ENCODE measurements at regions of chr3 and their contacts with region 1.

Region 1: GRCh38 chr3:71725279-71725991 is at the start of gene EIF4E3:
- DNase-seq: peak; percentile 40
- H3K4me3 Mint-ChIP-seq: peak within 1 kb of the TSS; percentile 98
- H3K27ac Mint-ChIP-seq: peak within 1 kb of the TSS; percentile 96
- H3K4me1 Mint-ChIP-seq: peaks cover 66% of the 10 kb centered on the region
- H3K27me3 Mint-ChIP-seq: no peaks in the 10 kb centered on the region
- total RNA-seq, gene EIF4E3: 36.7 to 37.6 TPM

Region 2: DNA sequence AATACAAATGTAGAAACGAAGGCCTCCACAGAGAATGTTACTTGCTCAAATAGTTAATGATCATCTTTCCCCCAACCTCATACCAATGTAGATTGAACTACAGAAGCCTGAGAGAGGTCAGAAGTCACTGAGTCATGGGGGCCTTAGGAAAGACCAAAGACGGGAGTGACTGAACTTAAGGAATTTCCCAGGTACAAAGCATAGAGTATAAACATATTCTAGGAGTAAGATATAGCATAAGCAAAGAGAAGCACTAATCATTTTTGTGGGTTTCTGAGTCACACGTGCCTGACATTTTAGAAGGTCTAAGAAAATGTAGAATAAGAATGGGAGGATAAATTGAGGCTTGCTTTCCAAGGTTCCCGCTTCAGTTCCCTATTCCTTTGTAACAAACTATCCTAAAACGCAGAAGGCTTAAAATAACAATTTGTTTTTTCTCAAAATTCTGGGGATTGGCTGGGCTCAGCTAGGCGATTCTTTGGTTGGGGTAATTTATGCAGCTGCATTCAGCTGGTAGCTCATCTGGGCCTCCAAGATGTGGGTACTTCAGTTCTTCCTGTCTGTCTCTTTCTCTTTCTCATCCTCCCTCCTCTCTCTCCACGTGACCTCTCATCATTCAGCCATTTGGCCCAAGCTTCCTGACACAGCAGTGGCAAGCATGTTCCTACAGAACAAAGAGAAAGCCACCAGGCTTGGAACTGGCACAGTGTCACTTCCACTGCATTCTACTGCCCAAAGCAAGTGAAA is 564.5 kb before region 1 on chr3:
- CTCF ChIA-PET with region 1: no interaction called
- POLR2A ChIA-PET with region 1: no interaction called
- intact Hi-C with region 1: no loop called
- DNase-seq: peak; percentile 18
- H3K4me3 Mint-ChIP-seq: no peak overlapping the region
- H3K27ac Mint-ChIP-seq: peak overlapping the region; percentile 51
- H3K4me1 Mint-ChIP-seq: peaks cover 56% of the 10 kb centered on the region
- H3K27me3 Mint-ChIP-seq: no peaks in the 10 kb centered on the region

Region 3: GRCh38 chr3:71360764-71361163 is 364.7 kb before region 1 on chr3:
- CTCF ChIA-PET with region 1: no interaction called
- POLR2A ChIA-PET with region 1: no interaction called
- intact Hi-C with region 1: loop called (anchors 5 kb)
- DNase-seq: peak; percentile 52
- H3K4me3 Mint-ChIP-seq: peak overlapping the region; percentile 39
- H3K27ac Mint-ChIP-seq: peak overlapping the region; percentile 89
- H3K4me1 Mint-ChIP-seq: peaks cover 76% of the 10 kb centered on the region
- H3K27me3 Mint-ChIP-seq: no peaks in the 10 kb centered on the region

Region 4: GRCh38 chr3:71753630-71754483 is 28.4 kb after region 1 on chr3 and contains the start of gene GPR27:
- CTCF ChIA-PET with region 1: interaction called, 7 read pairs
- POLR2A ChIA-PET with region 1: no interaction called
- intact Hi-C with region 1: loop called (anchors 2 kb)
- DNase-seq: peak; percentile 41
- H3K4me3 Mint-ChIP-seq: peak within 1 kb of the TSS; percentile 54
- H3K27ac Mint-ChIP-seq: no peak within 1 kb of the TSS
- H3K4me1 Mint-ChIP-seq: peaks cover 5% of the 10 kb centered on the region
- H3K27me3 Mint-ChIP-seq: peaks cover 38% of the 10 kb centered on the region
- total RNA-seq, gene GPR27: 1.2 to 1.3 TPM

Region 5: GRCh38 chr3:71978150-71978721 is 252.8 kb after region 1 on chr3:
- CTCF ChIA-PET with region 1: no interaction called
- POLR2A ChIA-PET with region 1: no interaction called
- intact Hi-C with region 1: loop called (anchors 5 kb)
- DNase-seq: peak; percentile 67
- H3K4me3 Mint-ChIP-seq: peak overlapping the region; percentile 38
- H3K27ac Mint-ChIP-seq: peak overlapping the region; percentile 88
- H3K4me1 Mint-ChIP-seq: peaks cover 44% of the 10 kb centered on the region
- H3K27me3 Mint-ChIP-seq: peaks cover 19% of the 10 kb centered on the region

Region 6: DNA sequence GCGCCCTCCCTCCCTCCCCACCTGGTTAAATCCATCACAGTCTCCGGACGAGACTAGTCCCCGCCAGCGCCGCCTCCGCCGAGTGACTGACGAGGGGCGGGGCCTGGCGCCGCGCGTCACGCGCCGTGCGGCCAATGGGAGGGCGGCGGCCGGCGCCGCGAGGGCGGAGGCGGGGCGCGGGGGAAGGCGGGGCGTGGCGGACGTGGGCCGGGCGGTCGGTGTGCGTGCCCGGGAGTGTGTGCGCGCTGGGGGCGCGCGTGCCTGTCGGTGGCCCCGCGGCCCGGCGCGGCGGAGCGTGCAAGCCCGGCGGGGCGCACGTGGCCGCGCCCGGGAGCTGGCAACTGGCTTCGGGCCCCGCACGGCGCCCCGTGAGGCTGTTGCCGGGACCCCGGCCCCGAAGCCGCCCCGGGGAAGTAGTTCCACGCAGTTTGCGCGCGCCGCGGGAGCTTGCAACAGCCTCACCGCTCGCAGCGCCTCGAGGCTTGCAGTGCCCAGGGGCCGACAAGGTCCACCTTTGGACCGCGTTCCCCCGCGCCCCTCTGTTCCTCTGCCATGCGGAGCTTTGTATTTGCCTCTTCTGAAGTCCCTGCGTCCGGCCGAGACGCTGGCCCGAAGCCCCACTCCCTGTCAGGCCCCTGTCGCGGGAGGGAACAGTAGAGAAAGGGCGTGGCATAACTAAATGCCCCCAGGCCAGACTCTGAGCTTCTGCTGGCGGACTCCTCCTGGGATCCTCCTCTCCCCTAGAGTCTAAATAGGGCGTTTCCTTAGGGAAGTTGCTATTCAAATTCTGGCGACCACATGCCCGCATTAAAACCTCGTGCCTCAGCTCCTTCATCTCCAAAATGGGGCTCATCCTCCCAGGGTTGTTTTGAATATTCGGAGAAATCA is 721.9 kb after region 1 on chr3:
- CTCF ChIA-PET with region 1: no interaction called
- POLR2A ChIA-PET with region 1: no interaction called
- intact Hi-C with region 1: loop called (anchors 10 kb)
- DNase-seq: peak; percentile 93
- H3K4me3 Mint-ChIP-seq: peak overlapping the region; percentile 61
- H3K27ac Mint-ChIP-seq: no peak overlapping the region
- H3K4me1 Mint-ChIP-seq: peaks cover 34% of the 10 kb centered on the region
- H3K27me3 Mint-ChIP-seq: peaks cover 23% of the 10 kb centered on the region

Region 7: GRCh38 chr3:72977060-72977808 is 1251.8 kb after region 1 on chr3:
- CTCF ChIA-PET with region 1: no interaction called
- POLR2A ChIA-PET with region 1: no interaction called
- intact Hi-C with region 1: no loop called
- DNase-seq: peak; percentile 57
- H3K4me3 Mint-ChIP-seq: peak overlapping the region; percentile 20
- H3K27ac Mint-ChIP-seq: peak overlapping the region; percentile 83
- H3K4me1 Mint-ChIP-seq: peaks cover 28% of the 10 kb centered on the region
- H3K27me3 Mint-ChIP-seq: peaks cover 2% of the 10 kb centered on the region

Region 8: DNA sequence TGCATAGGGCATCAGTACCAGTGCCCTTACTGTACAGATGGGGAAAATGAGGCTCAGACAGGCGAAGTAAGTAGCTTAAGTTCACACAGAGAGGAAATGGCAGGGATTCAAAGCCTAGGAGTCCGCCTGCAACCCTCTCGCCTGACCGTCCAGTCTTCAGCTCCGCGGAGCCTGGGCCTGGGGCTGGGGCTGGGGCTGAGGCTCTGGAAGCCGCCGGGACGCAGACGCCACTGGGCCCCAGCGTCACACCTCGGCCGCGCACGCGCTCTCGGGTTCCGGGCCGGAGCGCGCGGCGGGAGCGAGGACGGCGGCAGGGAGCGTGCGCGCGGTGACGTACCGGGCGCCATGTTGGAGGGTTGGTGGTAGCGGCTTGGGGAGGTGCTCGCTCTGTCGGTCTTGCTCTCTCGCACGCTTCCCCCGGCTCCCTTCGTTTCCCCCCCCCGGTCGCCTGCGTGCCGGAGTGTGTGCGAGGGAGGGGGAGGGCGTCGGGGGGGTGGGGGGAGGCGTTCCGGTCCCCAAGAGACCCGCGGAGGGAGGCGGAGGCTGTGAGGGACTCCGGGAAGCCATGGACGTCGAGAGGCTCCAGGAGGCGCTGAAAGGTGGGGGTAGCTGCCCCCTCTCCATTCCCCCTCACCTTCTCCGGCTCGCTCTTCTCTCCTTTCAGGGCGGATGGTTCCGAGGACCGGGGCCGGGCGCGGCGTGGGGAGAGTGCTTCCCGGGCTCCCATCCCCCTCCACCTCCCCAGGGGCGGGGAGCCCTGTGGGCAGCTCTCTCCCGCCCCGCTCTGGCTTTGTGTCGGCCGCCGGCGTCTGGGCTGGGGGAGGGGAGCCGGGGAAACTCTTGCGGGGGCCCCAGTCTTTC is 1271.3 kb after region 1 on chr3 and contains the start of gene PPP4R2:
- CTCF ChIA-PET with region 1: no interaction called
- POLR2A ChIA-PET with region 1: no interaction called
- intact Hi-C with region 1: loop called (anchors 10 kb)
- DNase-seq: peak; percentile 94
- H3K4me3 Mint-ChIP-seq: peak within 1 kb of the TSS; percentile 92
- H3K27ac Mint-ChIP-seq: peak within 1 kb of the TSS; percentile 90
- H3K4me1 Mint-ChIP-seq: peaks cover 39% of the 10 kb centered on the region
- H3K27me3 Mint-ChIP-seq: no peaks in the 10 kb centered on the region
- total RNA-seq, gene PPP4R2: 107 to 108 TPM

Measured in activated CD4-positive, alpha-beta memory T cell treated with anti-CD3 and anti-CD28 coated beads for 36 hours (primary cell).